ENCODE measurements at regions of chr13 and their contacts with region 1.

Region 1: GRCh38 chr13:77751513-77752456 is 54.3 kb downstream of the SLAIN1 start:
- DNase-seq: peak; percentile 6
- ATAC-seq: peak; percentile 60
- H3K4me3 ChIP-seq: no peak overlapping the region
- H3K27ac ChIP-seq: no peak overlapping the region
- H3K4me1 ChIP-seq: no peaks in the 10 kb centered on the region
- H3K27me3 ChIP-seq: no peaks in the 10 kb centered on the region
- CTCF ChIP-seq: peak; percentile 53 to 73 (median 54); a peak in 5 of 6 replicates
- POLR2A ChIP-seq: no peak
- RAD21 ChIP-seq: peak; percentile 55

Region 2: GRCh38 chr13:77599351-77599750 is 152.4 kb before region 1 on chr13:
- CTCF ChIA-PET with region 1: no interaction called
- POLR2A ChIA-PET with region 1: no interaction called
- RAD21 ChIA-PET with region 1: no interaction called
- intact Hi-C with region 1: loop called (anchors 2 kb)
- DNase-seq: no peak
- ATAC-seq: no peak
- H3K4me3 ChIP-seq: no peak overlapping the region
- H3K27ac ChIP-seq: no peak overlapping the region
- H3K4me1 ChIP-seq: no peaks in the 10 kb centered on the region
- H3K27me3 ChIP-seq: peaks cover 8% of the 10 kb centered on the region
- CTCF ChIP-seq: no peak
- POLR2A ChIP-seq: no peak
- RAD21 ChIP-seq: no peak

Region 3: GRCh38 chr13:78372581-78372980 is 620.8 kb after region 1 on chr13:
- CTCF ChIA-PET with region 1: no interaction called
- POLR2A ChIA-PET with region 1: no interaction called
- RAD21 ChIA-PET with region 1: no interaction called
- intact Hi-C with region 1: no loop called
- DNase-seq: no peak
- ATAC-seq: no peak
- H3K4me3 ChIP-seq: no peak overlapping the region
- H3K27ac ChIP-seq: no peak overlapping the region
- H3K4me1 ChIP-seq: no peaks in the 10 kb centered on the region
- H3K27me3 ChIP-seq: no peaks in the 10 kb centered on the region
- CTCF ChIP-seq: no peak
- POLR2A ChIP-seq: no peak
- RAD21 ChIP-seq: no peak